ENCODE measurements at regions of chr6 and their contacts with region 1.

Region 1: DNA sequence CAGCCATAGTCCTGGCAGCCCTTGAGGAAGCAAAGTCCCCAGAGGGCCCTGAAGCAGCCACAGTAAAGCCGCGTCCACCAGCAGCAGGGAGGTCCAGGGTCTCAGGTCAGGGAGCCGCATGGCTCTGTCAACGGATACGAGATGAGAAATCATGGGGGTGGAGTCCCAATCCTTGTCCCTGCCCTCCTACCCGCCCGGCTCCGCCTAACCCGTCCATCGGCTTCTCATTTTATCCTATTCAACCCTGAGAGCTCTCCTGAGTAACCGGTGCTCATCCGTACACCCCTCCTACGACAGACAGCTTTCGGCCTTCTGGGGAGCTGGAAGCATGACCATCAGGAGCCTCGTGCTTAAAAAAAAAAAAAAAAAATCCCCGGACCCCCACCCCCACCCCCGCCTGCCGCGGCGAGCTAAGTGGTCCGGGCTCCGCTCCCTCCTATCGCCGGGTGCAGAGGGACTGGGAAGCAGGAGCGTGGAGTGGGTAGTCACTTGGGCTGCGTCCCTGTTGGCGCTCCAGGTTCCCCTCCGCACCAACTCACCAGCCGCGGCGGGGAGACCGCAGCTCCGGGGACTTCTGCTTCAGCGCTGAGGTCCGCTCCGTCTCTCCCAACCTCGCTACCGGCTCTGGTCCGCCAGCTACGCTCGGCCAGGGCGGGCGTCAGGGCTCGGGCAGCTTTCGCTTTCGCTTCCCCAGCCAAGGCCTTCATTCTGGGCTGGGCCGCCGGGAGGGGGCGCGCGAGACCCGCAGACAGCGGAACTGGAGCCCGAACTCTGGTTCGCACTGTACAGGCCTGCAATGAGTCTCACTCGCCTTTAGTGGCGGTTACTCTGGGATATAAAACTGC is at the start of gene TAP2:
- DNase-seq: no peak
- ATAC-seq: peak; percentile 85
- H3K4me3 ChIP-seq: peak within 1 kb of the TSS; percentile 95
- H3K27ac ChIP-seq: peak within 1 kb of the TSS; percentile 75
- H3K4me1 ChIP-seq: peaks cover 60% of the 10 kb centered on the region
- H3K27me3 ChIP-seq: no peaks in the 10 kb centered on the region
- CTCF ChIP-seq: peak; percentile 89 to 97 (median 96); a peak in 5 of 6 replicates
- EP300 ChIP-seq: no peak
- POLR2A ChIP-seq: peak; percentile 86
- RAD21 ChIP-seq: peak; percentile 98
- polyA plus RNA-seq, gene TAP2: 5.3 to 6.7 TPM

Region 2: DNA sequence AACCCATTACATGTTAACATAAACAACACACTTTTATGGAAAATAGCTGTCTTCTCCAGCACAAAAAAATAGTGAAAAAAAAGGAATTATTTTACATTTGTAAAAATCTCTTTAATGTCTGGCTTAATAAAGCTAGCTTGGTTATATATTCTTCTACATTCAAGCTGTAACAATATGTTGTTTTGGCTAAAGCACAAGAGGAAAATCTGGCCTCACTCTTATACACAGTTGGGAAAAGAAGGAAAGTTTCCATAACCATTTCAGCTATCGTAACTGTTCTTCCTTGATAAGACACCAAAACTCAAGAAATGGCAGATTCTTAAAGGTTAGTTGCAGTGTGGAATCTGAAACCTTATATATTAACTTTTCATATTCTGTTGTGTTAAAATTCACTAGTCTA is 29.2 kb before region 1 on chr6:
- CTCF ChIA-PET with region 1: interaction called, 20 read pairs
- POLR2A ChIA-PET with region 1: interaction called, 4 read pairs
- RAD21 ChIA-PET with region 1: interaction called, 8 read pairs
- SMC1A ChIA-PET with region 1: interaction called, 10 read pairs
- in situ Hi-C with region 1: no loop called
- intact Hi-C with region 1: no loop called
- DNase-seq: no peak
- ATAC-seq: no peak
- H3K4me3 ChIP-seq: no peak overlapping the region
- H3K27ac ChIP-seq: no peak overlapping the region
- H3K4me1 ChIP-seq: peaks cover 3% of the 10 kb centered on the region; the same call in 1 of the 2 replicates
- H3K27me3 ChIP-seq: no peaks in the 10 kb centered on the region
- CTCF ChIP-seq: no peak
- EP300 ChIP-seq: no peak
- POLR2A ChIP-seq: no peak
- RAD21 ChIP-seq: no peak

Region 3: DNA sequence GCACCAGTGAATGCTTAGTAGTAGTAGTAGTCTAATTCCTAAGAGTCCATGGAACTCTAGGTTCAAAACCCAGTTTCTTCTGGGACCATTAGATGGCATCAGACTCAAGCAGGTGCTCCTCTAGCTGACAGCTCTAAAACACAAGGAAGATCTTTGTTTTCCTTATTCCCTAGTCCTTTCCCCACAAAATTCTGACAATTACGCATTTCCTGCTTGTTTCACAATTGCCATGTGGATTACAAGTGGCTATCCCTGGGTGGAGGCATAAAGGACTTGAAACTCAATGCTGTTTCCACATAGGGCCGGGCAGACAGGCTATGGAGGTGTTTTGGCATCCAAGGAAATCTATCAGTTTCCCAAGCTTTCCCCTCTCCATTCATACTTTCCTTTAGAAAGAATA is 12.4 kb before region 1 on chr6:
- CTCF ChIA-PET with region 1: interaction called, 27 read pairs
- POLR2A ChIA-PET with region 1: interaction called, 11 read pairs
- RAD21 ChIA-PET with region 1: interaction called, 13 read pairs
- SMC1A ChIA-PET with region 1: interaction called, 12 read pairs
- in situ Hi-C with region 1: no loop called
- intact Hi-C with region 1: no loop called
- DNase-seq: no peak
- ATAC-seq: peak; percentile 36; the same call in 1 of the 3 replicates
- H3K4me3 ChIP-seq: no peak overlapping the region
- H3K27ac ChIP-seq: no peak overlapping the region
- H3K4me1 ChIP-seq: no peaks in the 10 kb centered on the region
- H3K27me3 ChIP-seq: no peaks in the 10 kb centered on the region
- CTCF ChIP-seq: peak; percentile 30 to 55 (median 36); a peak in 4 of 6 replicates
- EP300 ChIP-seq: no peak
- POLR2A ChIP-seq: no peak
- RAD21 ChIP-seq: peak; percentile 39

Region 4: DNA sequence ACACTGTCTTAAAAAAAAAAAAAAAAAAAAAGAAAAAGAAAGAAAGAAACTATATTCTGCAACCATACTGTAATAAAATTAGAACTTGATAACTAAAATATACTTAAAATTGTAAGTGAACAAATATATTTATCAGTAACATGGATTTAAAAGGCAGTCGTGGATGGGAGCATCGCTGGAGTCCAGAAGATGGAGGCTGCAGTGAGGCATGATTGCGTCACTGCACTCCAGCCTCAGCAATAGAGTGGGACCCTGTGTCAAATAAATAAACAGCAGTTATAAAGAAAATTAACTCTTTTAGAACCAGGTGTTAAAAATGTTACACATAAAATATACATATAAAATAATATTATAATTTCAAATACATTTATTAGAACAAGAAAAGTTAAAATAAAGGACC is 24.4 kb after region 1 on chr6:
- CTCF ChIA-PET with region 1: interaction called, 311 read pairs
- POLR2A ChIA-PET with region 1: interaction called, 357 read pairs
- RAD21 ChIA-PET with region 1: interaction called, 269 read pairs
- SMC1A ChIA-PET with region 1: interaction called, 226 read pairs
- in situ Hi-C with region 1: no loop called
- intact Hi-C with region 1: no loop called
- DNase-seq: no peak
- ATAC-seq: no peak
- H3K4me3 ChIP-seq: no peak overlapping the region
- H3K27ac ChIP-seq: no peak overlapping the region
- H3K4me1 ChIP-seq: peaks cover 32% of the 10 kb centered on the region
- H3K27me3 ChIP-seq: no peaks in the 10 kb centered on the region
- CTCF ChIP-seq: no peak
- EP300 ChIP-seq: no peak
- POLR2A ChIP-seq: no peak
- RAD21 ChIP-seq: no peak

Region 5: DNA sequence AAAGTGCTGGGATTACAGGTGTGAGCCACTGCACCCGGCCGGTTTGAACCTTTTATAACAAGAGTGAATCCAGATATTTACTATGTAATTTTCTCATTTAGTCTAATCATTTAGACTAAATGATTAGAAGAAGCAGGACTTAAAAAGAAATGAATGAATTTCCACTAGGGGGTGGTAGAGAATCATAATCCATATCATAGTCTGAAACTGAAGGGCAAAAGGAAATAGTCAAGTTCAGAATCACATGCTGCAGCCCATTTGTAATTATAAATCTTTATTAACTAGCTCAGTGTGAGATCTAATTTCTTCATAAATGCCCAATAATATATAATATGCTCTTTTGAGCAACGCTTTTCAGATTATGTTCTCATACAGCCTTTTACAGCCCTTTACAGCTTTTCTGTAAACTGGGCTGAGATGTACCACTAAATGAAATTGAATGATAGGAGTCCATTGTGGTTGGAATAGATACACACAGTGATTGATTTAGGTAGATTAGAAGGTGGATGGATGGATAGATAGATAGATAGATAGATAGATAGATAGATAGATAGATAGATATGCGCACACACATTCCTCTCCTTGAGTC is 47.5 kb after region 1 on chr6:
- CTCF ChIA-PET with region 1: interaction called, 9 read pairs
- POLR2A ChIA-PET with region 1: interaction called, 3 read pairs
- RAD21 ChIA-PET with region 1: interaction called, 12 read pairs
- SMC1A ChIA-PET with region 1: interaction called, 11 read pairs
- in situ Hi-C with region 1: no loop called
- intact Hi-C with region 1: no loop called
- DNase-seq: peak; percentile 23
- ATAC-seq: peak; percentile 83
- H3K4me3 ChIP-seq: no peak overlapping the region
- H3K27ac ChIP-seq: no peak overlapping the region
- H3K4me1 ChIP-seq: 0 out of 2 replicates have a peak, but pooled peaks cover 3% of the 10 kb centered on the region
- H3K27me3 ChIP-seq: no peaks in the 10 kb centered on the region; a peak in 1 of 4 replicates
- CTCF ChIP-seq: peak; percentile 38 to 61 (median 43); a peak in 5 of 6 replicates
- EP300 ChIP-seq: no peak
- POLR2A ChIP-seq: no peak
- RAD21 ChIP-seq: peak; percentile 83

Region 6: GRCh38 chr6:32947552-32948465 is 109.5 kb after region 1 on chr6:
- CTCF ChIA-PET with region 1: interaction called, 25 read pairs
- POLR2A ChIA-PET with region 1: interaction called, 7 read pairs
- RAD21 ChIA-PET with region 1: interaction called, 20 read pairs
- SMC1A ChIA-PET with region 1: interaction called, 20 read pairs
- in situ Hi-C with region 1: no loop called
- intact Hi-C with region 1: loop called (anchors 2 kb)
- DNase-seq: peak; percentile 56
- ATAC-seq: peak; percentile 13; the same call in 2 of the 3 replicates
- H3K4me3 ChIP-seq: peak overlapping the region; percentile 22
- H3K27ac ChIP-seq: peak overlapping the region; percentile 59
- H3K4me1 ChIP-seq: peaks cover 55% of the 10 kb centered on the region
- H3K27me3 ChIP-seq: no peaks in the 10 kb centered on the region
- CTCF ChIP-seq: peak; percentile 69 to 88 (median 82)
- EP300 ChIP-seq: no peak
- POLR2A ChIP-seq: no peak
- RAD21 ChIP-seq: peak; percentile 92